ENCODE measurements at regions of chr5 and their contacts with region 1.

Region 1: GRCh38 chr5:36264202-36264760 is 22.6 kb upstream of the NADK2 start:
- DNase-seq: no peak
- ATAC-seq: no peak
- H3K4me3 ChIP-seq: no peak overlapping the region
- H3K27ac ChIP-seq: no peak overlapping the region
- H3K4me1 ChIP-seq: no peaks in the 10 kb centered on the region
- H3K27me3 ChIP-seq: 0 out of 2 replicates have a peak, but pooled peaks cover 2% of the 10 kb centered on the region
- CTCF ChIP-seq: no peak

Region 2: GRCh38 chr5:35672995-35673394 is 591.3 kb before region 1 on chr5:
- CTCF ChIA-PET with region 1: no interaction called
- POLR2A ChIA-PET with region 1: no interaction called
- in situ Hi-C with region 1: no loop called
- intact Hi-C with region 1: no loop called
- DNase-seq: no peak
- ATAC-seq: no peak
- H3K4me3 ChIP-seq: no peak overlapping the region
- H3K27ac ChIP-seq: no peak overlapping the region
- H3K4me1 ChIP-seq: no peaks in the 10 kb centered on the region
- H3K27me3 ChIP-seq: no peaks in the 10 kb centered on the region
- CTCF ChIP-seq: no peak

Region 3: DNA sequence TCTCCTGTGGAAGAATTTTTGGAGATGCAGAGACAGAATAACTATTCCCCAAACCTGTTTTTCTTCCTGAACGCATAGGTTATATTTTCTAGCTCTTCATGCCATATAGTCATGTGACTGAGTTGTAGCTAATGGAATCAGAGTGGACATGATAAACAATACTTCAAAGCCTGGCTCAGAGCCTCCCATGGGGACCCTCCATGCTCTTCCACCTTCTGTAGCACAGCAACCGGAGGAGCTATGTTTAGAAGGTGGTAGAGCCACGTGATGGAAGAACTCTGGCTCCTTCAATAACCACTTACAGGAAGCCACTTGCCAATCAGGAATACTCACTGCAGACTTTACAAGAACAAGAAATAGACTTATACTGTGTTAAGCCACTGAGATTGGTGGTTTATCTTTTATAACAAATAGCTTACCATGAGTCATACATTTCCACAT is 61.7 kb before region 1 on chr5:
- CTCF ChIA-PET with region 1: interaction called, 11 read pairs
- POLR2A ChIA-PET with region 1: no interaction called
- in situ Hi-C with region 1: no loop called
- intact Hi-C with region 1: no loop called
- DNase-seq: no peak
- ATAC-seq: no peak
- H3K4me3 ChIP-seq: no peak overlapping the region
- H3K27ac ChIP-seq: no peak overlapping the region
- H3K4me1 ChIP-seq: no peaks in the 10 kb centered on the region
- H3K27me3 ChIP-seq: no peaks in the 10 kb centered on the region
- CTCF ChIP-seq: no peak

Region 4: DNA sequence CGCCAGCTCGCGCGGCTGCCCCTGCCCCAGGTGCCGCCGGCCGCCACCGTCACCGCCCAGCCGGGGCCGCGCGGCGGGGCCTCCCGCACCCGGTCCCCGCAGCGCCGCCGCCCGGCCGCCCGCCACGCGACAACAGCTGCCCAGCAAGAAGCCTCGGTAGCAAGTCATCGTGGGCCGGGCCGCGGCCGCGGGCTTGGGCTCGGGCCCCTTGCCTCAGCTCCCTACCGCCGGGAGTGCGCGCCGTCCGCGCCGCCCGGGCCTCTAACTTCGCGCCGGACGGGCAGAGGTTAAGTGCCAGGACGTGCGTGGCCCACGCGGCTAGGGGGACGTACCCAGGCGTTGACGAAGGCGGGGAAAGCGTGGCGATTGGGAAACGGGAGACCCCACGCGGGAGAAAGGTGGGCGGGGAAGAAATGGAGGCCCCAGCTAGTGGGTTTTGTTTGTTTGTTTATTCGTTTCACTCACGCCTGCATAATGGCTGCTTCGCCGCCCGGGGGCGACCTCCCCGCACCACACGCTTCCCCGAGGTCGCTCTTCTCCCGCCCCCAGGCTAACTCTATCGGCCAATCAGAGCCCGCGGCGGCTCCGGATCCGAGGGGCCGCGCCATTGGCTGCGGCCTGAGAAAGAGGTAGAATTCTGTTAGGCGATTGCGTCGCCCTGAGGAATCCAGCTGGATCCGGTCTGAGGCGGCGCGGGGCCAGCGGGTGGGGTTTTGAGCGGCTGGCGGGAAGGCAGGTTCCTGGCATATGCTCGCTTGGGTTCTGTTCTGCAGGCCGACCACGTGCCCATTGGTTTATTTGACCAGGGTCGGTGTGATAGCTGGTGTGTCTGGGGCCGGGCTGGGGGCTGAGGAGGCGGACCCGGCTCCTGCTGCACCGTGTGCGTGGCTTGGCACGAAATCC is 22.4 kb before region 1 on chr5 and contains the start of gene NADK2:
- CTCF ChIA-PET with region 1: no interaction called
- POLR2A ChIA-PET with region 1: no interaction called
- in situ Hi-C with region 1: no loop called
- intact Hi-C with region 1: no loop called
- DNase-seq: peak; percentile 85
- ATAC-seq: peak; percentile 92
- H3K4me3 ChIP-seq: peak within 1 kb of the TSS; percentile 79
- H3K27ac ChIP-seq: peak within 1 kb of the TSS; percentile 80
- H3K4me1 ChIP-seq: peaks cover 25% of the 10 kb centered on the region
- H3K27me3 ChIP-seq: no peaks in the 10 kb centered on the region
- CTCF ChIP-seq: peak; percentile 80
- total RNA-seq, gene NADK2: 22.5 TPM

Region 5: GRCh38 chr5:36305571-36306326 is 41.5 kb after region 1 on chr5:
- CTCF ChIA-PET with region 1: interaction called, 10 read pairs
- POLR2A ChIA-PET with region 1: no interaction called
- in situ Hi-C with region 1: no loop called
- intact Hi-C with region 1: loop called (anchors 1 kb)
- DNase-seq: peak; percentile 38
- ATAC-seq: peak; percentile 85
- H3K4me3 ChIP-seq: no peak overlapping the region
- H3K27ac ChIP-seq: no peak overlapping the region
- H3K4me1 ChIP-seq: no peaks in the 10 kb centered on the region; the same call in 1 of the 2 replicates
- H3K27me3 ChIP-seq: no peaks in the 10 kb centered on the region; the same call in none of the 2 replicates
- CTCF ChIP-seq: peak; percentile 87

Region 6: GRCh38 chr5:36397901-36398536 is 133.7 kb after region 1 on chr5:
- CTCF ChIA-PET with region 1: no interaction called
- POLR2A ChIA-PET with region 1: no interaction called
- in situ Hi-C with region 1: no loop called
- intact Hi-C with region 1: loop called (anchors 2 kb)
- DNase-seq: no peak
- ATAC-seq: no peak
- H3K4me3 ChIP-seq: no peak overlapping the region
- H3K27ac ChIP-seq: no peak overlapping the region
- H3K4me1 ChIP-seq: no peaks in the 10 kb centered on the region
- H3K27me3 ChIP-seq: no peaks in the 10 kb centered on the region; the same call in 1 of the 2 replicates
- CTCF ChIP-seq: peak; percentile 29; the same call in 1 of the 2 replicates

Region 7: GRCh38 chr5:36552626-36553393 is 288.5 kb after region 1 on chr5:
- CTCF ChIA-PET with region 1: no interaction called
- POLR2A ChIA-PET with region 1: no interaction called
- in situ Hi-C with region 1: no loop called
- intact Hi-C with region 1: no loop called
- DNase-seq: no peak
- ATAC-seq: no peak
- H3K4me3 ChIP-seq: no peak overlapping the region
- H3K27ac ChIP-seq: no peak overlapping the region
- H3K4me1 ChIP-seq: no peaks in the 10 kb centered on the region
- H3K27me3 ChIP-seq: no peaks in the 10 kb centered on the region
- CTCF ChIP-seq: no peak

Region 8: DNA sequence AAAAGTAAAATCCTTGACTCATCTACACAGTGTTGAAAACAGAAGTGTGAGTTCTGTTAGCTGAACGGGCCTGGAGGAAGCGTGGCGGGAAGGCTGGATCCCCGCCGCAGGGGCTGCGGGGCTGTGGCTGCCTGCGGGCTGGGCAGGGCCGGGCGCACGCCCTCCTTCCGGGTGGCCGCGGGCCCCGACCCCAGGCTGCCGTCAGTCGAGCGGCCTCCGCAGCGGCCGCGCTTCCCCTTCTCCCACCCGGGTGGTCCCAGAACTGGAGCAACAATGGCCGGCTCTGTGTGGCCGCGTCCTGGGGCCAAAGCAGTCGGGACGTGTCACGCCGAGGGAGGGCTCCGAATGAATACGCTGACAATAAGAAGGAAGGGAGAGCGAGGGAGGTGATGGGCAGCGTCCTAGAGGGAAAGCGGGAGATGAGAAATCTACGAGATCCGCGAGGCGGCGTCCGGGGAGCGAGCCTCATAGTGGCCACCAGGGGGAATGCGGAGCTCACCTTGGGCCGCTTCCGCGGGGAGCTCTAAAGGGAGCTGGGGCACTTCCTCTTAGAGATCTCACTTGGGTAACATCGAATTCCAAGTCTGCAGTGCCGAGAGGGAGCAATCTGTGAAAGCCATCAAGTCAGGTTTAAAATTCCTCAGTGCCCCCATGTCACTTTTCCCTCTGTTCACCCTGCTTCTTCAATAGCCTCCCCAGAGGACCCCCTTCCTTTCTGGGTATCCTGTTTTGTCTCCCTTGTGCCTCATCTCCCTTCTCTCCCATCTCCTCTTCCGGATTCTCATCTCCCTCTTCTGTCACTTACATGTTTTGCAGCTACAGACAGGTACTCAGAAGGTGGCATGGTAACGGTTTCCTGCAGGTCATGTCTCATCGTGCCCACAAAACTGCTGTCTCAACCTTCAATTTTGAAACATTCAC is 426.0 kb after region 1 on chr5:
- CTCF ChIA-PET with region 1: no interaction called
- POLR2A ChIA-PET with region 1: no interaction called
- in situ Hi-C with region 1: no loop called
- intact Hi-C with region 1: loop called (anchors 2 kb)
- DNase-seq: peak; percentile 52
- ATAC-seq: peak; percentile 96
- H3K4me3 ChIP-seq: peak overlapping the region; percentile 41 to 59
- H3K27ac ChIP-seq: no peak overlapping the region
- H3K4me1 ChIP-seq: peaks cover 4% of the 10 kb centered on the region; the same call in 1 of the 2 replicates
- H3K27me3 ChIP-seq: no peaks in the 10 kb centered on the region; the same call in 1 of the 2 replicates
- CTCF ChIP-seq: peak; percentile 93

Region 9: GRCh38 chr5:37308796-37309195 is 1044.5 kb after region 1 on chr5:
- CTCF ChIA-PET with region 1: no interaction called
- POLR2A ChIA-PET with region 1: no interaction called
- in situ Hi-C with region 1: no loop called
- intact Hi-C with region 1: no loop called
- DNase-seq: no peak
- ATAC-seq: no peak
- H3K4me3 ChIP-seq: no peak overlapping the region
- H3K27ac ChIP-seq: no peak overlapping the region
- H3K4me1 ChIP-seq: no peaks in the 10 kb centered on the region
- H3K27me3 ChIP-seq: no peaks in the 10 kb centered on the region
- CTCF ChIP-seq: no peak